Natural killer cell (primary cell): ENCODE measurements at regions of chr10 and their contacts with region 1.

Region 1: DNA sequence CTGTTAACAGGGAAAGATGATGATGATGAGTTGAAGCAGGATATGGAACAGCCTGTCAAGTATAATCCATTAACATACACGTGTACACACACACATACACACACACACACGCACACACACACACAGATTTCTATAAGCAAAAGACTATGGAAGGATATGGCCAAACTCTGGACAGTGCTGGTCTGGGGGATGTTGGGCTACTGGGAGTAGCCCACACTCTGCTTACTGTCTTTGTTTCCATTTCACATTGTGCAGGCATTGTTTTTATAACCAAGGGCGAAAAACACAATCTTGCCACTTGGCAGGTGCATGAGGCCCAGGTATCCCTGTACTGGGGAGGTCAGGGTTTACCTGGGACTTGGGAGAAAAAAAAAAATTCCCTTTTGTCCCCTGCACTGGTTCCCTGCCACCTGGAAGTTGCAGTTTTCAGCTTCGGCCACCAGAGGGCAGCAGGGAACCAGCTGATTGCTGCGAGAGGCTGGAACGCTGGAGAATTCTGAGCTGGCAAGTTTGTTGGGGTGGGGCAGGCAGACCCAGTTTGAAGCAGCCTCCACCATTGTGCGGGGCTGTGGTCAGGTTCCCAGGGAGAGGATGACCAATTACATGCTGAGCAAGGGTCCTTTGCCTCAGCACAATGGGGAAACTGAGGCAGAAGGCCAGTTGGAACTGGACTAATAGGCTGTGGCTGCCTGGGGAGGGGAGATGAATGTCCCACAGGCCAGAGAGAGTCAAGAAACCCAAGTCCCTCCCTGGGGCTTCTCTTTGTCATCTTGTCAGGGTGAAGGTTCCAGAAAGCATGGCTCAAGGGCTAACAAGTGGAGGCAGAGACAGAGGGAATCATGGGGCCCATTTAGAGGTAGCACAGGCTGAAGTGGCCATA is 27.3 kb downstream of the PPIF start:
- DNase-seq: peak; percentile 73 to 83
- ATAC-seq: peak; percentile 79 to 93 (median 85)
- H3K4me3 ChIP-seq: no peak overlapping the region
- H3K4me3 Mint-ChIP-seq: no peak overlapping the region
- H3K27ac ChIP-seq: no peak overlapping the region
- H3K27ac Mint-ChIP-seq: no peak overlapping the region
- H3K4me1 ChIP-seq: peaks cover 4% of the 10 kb centered on the region
- H3K4me1 Mint-ChIP-seq: peaks cover 0 to 5% of the 10 kb centered on the region in 2 donors
- H3K27me3 ChIP-seq: no peaks in the 10 kb centered on the region
- H3K27me3 Mint-ChIP-seq: no peaks in the 10 kb centered on the region
- CTCF ChIP-seq: peak; percentile 93

Region 2: GRCh38 chr10:79052291-79053080 is 322.1 kb before region 1 on chr10:
- intact Hi-C with region 1: no loop called
- DNase-seq: peak in 1 of 2 donors; percentile 69
- ATAC-seq: peak in 1 of 3 donors; percentile 47
- H3K4me3 ChIP-seq: no peak overlapping the region
- H3K4me3 Mint-ChIP-seq: no peak overlapping the region
- H3K27ac ChIP-seq: no peak overlapping the region
- H3K27ac Mint-ChIP-seq: no peak overlapping the region
- H3K4me1 ChIP-seq: peaks cover 19% of the 10 kb centered on the region
- H3K4me1 Mint-ChIP-seq: peaks cover 6 to 17% of the 10 kb centered on the region in 2 donors
- H3K27me3 ChIP-seq: no peaks in the 10 kb centered on the region
- H3K27me3 Mint-ChIP-seq: peaks cover 0 to 5% of the 10 kb centered on the region in 2 donors
- CTCF ChIP-seq: no peak

Region 3: DNA sequence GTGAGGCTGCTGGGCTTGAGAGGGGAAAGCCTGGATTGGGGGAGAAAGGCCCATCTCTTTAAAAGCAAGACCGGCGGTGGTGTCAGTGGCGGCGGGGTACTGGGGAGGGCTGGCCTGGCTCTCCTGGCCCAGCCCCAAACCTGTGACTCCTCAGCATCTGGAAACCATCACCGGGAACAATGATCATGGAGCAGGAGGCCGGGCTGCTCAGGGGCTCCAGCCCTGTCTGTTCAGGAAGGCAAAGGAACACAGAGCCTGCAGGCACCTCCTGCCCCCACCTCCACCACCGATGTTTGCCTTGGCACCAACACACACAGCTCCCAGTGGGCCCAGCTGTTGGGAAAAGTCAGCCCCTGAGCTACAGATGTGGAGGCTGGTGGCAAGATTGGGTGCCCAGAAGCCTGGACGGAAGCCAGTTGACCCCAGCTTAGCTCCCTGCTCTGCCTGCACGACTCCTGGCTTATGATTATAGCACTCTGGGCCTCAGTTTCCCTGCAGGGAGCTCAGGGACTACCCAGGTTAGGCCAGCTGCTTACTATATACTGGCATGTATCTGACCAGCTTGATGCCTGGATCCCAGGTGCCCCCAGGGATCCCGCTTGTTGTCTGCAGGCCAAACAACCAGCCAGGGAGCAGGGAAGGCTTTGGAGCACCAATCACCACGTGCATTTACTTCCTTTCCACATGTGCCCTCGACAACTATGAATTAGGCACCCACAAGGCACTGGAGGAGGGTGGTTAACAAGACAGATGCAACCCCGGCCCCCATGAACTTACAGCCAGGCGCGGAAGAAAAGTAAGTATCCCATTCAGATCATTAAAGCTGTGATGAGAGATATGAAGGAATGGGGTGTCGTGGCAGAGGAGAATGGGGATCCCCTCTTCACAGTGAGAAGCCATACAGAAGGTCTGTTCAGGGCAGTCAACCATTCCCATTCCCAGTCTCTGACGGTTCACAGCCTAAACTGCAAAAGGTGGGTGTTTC is 33.6 kb after region 1 on chr10:
- intact Hi-C with region 1: no loop called
- DNase-seq: no peak
- ATAC-seq: no peak
- H3K4me3 ChIP-seq: no peak overlapping the region
- H3K4me3 Mint-ChIP-seq: no peak overlapping the region
- H3K27ac ChIP-seq: no peak overlapping the region
- H3K27ac Mint-ChIP-seq: no peak overlapping the region
- H3K4me1 ChIP-seq: peaks cover 15% of the 10 kb centered on the region
- H3K4me1 Mint-ChIP-seq: peaks cover 13 to 24% of the 10 kb centered on the region in 2 donors
- H3K27me3 ChIP-seq: no peaks in the 10 kb centered on the region
- H3K27me3 Mint-ChIP-seq: no peaks in the 10 kb centered on the region
- CTCF ChIP-seq: no peak

Region 4: GRCh38 chr10:79463578-79464496 is 89.3 kb after region 1 on chr10:
- intact Hi-C with region 1: loop called (anchors 1 kb)
- DNase-seq: no peak
- ATAC-seq: no peak
- H3K4me3 ChIP-seq: no peak overlapping the region
- H3K4me3 Mint-ChIP-seq: no peak overlapping the region
- H3K27ac ChIP-seq: no peak overlapping the region
- H3K27ac Mint-ChIP-seq: no peak overlapping the region
- H3K4me1 ChIP-seq: no peaks in the 10 kb centered on the region
- H3K4me1 Mint-ChIP-seq: no peaks in the 10 kb centered on the region
- H3K27me3 ChIP-seq: no peaks in the 10 kb centered on the region
- H3K27me3 Mint-ChIP-seq: peaks cover 0 to 2% of the 10 kb centered on the region in 2 donors
- CTCF ChIP-seq: no peak

Region 5: GRCh38 chr10:79487296-79488194 is 113.0 kb after region 1 on chr10:
- intact Hi-C with region 1: loop called (anchors 1 kb)
- DNase-seq: peak in 1 of 2 donors; percentile 55
- ATAC-seq: peak; percentile 52 to 78 (median 70)
- H3K4me3 ChIP-seq: no peak overlapping the region
- H3K4me3 Mint-ChIP-seq: no peak overlapping the region
- H3K27ac ChIP-seq: no peak overlapping the region
- H3K27ac Mint-ChIP-seq: no peak overlapping the region
- H3K4me1 ChIP-seq: no peaks in the 10 kb centered on the region
- H3K4me1 Mint-ChIP-seq: no peaks in the 10 kb centered on the region
- H3K27me3 ChIP-seq: no peaks in the 10 kb centered on the region
- H3K27me3 Mint-ChIP-seq: peaks cover 0 to 2% of the 10 kb centered on the region in 2 donors
- CTCF ChIP-seq: peak; percentile 63

Region 6: DNA sequence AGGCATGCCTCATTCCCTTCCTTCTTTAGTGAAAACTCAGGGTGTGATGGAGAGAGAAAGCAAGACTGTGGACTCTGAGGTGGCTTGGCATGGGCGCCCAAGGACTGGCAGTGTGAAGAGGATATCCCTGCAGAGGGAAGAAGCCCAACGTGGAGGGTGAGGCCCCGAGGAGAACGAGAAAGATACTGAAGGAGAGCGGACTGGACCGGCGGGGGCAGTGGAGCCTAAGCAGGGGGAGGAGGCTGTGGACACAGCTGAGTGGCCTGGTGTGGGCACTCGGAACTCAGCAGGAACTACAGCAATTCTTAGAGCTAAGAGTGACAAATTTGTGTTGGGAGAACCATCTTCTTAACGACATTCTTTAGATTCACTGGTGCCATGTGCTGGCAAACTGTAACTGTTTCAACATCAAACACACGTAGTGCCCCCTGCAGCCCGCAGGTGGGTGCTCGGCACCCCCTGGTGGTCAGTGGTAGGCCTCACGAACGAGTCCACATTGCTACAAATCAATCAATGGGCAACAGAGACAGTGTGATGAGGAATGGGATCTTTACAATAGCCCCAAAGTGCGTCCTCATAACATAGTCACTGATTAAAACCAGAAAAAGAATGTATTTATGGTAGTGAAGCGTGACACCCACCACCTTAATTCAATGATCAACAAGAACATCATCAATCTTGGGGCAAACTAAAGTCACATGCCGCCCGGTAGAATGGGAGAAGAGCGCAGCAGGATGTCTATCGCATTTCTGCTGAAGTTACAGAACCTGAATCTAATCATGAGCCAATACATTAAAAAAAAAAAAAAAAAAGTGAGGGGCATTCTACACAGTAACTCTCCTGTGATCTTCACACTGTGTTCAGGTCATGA is 234.2 kb after region 1 on chr10:
- intact Hi-C with region 1: loop called (anchors 10 kb)
- DNase-seq: peak in 1 of 2 donors; percentile 55
- ATAC-seq: peak in 1 of 3 donors; percentile 43
- H3K4me3 ChIP-seq: no peak overlapping the region
- H3K4me3 Mint-ChIP-seq: no peak overlapping the region
- H3K27ac ChIP-seq: no peak overlapping the region
- H3K27ac Mint-ChIP-seq: no peak overlapping the region
- H3K4me1 ChIP-seq: no peaks in the 10 kb centered on the region
- H3K4me1 Mint-ChIP-seq: no peaks in the 10 kb centered on the region
- H3K27me3 ChIP-seq: no peaks in the 10 kb centered on the region
- H3K27me3 Mint-ChIP-seq: peaks cover 0 to 11% of the 10 kb centered on the region in 2 donors
- CTCF ChIP-seq: peak; percentile 34

Region 7: GRCh38 chr10:80090121-80090520 is 715.6 kb after region 1 on chr10:
- intact Hi-C with region 1: no loop called
- DNase-seq: no peak
- ATAC-seq: peak in 1 of 3 donors; percentile 64
- H3K4me3 ChIP-seq: no peak overlapping the region
- H3K4me3 Mint-ChIP-seq: no peak overlapping the region
- H3K27ac ChIP-seq: no peak overlapping the region
- H3K27ac Mint-ChIP-seq: no peak overlapping the region
- H3K4me1 ChIP-seq: no peaks in the 10 kb centered on the region
- H3K4me1 Mint-ChIP-seq: no peaks in the 10 kb centered on the region
- H3K27me3 ChIP-seq: no peaks in the 10 kb centered on the region
- H3K27me3 Mint-ChIP-seq: no peaks in the 10 kb centered on the region
- CTCF ChIP-seq: no peak